Transverse colon (tissue), 4 donors: ENCODE measurements at regions of chr4 and their contacts with region 1.

Region 1: GRCh38 chr4:187606581-187606980 is 389.0 kb upstream of the ZFP42 start:
- DNase-seq: peak; percentile 15
- H3K4me3 ChIP-seq: no peak overlapping the region
- H3K27ac ChIP-seq: no peak overlapping the region
- H3K4me1 ChIP-seq: no peaks in the 10 kb centered on the region
- H3K27me3 ChIP-seq: no peaks in the 10 kb centered on the region
- CTCF ChIP-seq: peak; percentile 74 to 83 (median 78)
- EP300 ChIP-seq: no peak
- POLR2A ChIP-seq: no peak

Region 2: DNA sequence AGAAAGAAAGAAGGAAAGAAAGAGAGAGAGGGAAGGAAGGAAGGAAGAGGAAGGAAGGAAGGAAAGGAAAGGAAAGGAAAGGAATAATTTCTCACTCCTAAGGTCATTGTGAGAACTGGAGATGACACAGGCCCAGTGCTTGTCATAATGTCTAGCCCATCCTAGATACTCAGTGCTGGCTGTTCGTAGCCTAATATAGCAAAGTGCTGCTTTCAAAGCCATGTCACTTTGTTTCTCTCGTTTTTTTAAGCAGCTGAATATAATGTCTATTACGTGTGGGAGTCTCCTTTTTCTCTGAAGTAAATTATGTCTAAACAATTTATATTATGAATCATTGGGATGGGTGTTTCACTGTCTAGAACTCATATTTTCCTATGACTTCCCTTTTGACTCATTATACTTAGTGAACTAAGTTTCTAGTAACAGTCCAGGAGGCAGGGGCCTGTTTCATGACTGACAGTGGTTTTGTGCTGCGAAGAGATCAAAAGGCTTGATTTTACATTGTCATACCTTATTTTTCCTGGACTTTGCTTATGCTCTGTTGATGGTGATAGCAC is 62.0 kb after region 1 on chr4:
- in situ Hi-C with region 1: no loop called
- intact Hi-C with region 1: loop called (anchors 2 kb)
- DNase-seq: no peak
- H3K4me3 ChIP-seq: no peak overlapping the region
- H3K27ac ChIP-seq: no peak overlapping the region
- H3K4me1 ChIP-seq: no peaks in the 10 kb centered on the region
- H3K27me3 ChIP-seq: no peaks in the 10 kb centered on the region
- CTCF ChIP-seq: no peak
- EP300 ChIP-seq: no peak
- POLR2A ChIP-seq: no peak